Activated CD8-positive, alpha-beta T cell treated with anti-CD3 and anti-CD28 coated beads for 36 hours (primary cell): ENCODE measurements at regions of chr1 and their contacts with region 1.

Region 1: GRCh38 chr1:66725885-66726665 is 26.2 kb upstream of the DYNLT5 start:
- DNase-seq: peak; percentile 66
- ATAC-seq: peak; percentile 87
- H3K4me3 Mint-ChIP-seq: no peak overlapping the region
- H3K27ac Mint-ChIP-seq: no peak overlapping the region
- H3K4me1 Mint-ChIP-seq: peaks cover 13% of the 10 kb centered on the region
- H3K27me3 Mint-ChIP-seq: peaks cover 19% of the 10 kb centered on the region
- CTCF ChIP-seq: peak; percentile 87

Region 2: DNA sequence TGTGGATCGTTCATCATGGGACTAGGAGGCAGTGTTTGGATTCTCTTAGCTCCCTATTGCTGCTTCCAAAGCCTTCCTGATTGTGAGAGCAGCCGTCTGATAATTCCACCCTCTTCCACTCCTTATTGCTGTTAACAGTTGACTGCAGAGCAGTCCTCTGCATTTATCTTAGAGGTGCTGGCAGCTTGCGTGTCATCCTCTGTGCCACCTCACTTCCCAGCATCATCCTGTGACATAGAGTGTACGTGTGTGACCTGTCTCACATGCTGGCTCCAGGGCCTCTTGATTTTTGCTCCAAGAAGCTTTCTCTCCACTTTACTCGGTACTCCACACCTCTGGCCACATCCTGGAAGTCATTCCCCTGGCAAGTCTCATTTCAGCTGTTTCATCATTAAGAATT is 26.9 kb before region 1 on chr1:
- CTCF ChIA-PET with region 1: interaction called, 11 read pairs
- POLR2A ChIA-PET with region 1: no interaction called
- intact Hi-C with region 1: no loop called
- DNase-seq: no peak
- ATAC-seq: no peak
- H3K4me3 Mint-ChIP-seq: no peak overlapping the region
- H3K27ac Mint-ChIP-seq: no peak overlapping the region
- H3K4me1 Mint-ChIP-seq: no peaks in the 10 kb centered on the region
- H3K27me3 Mint-ChIP-seq: peaks cover 3% of the 10 kb centered on the region
- CTCF ChIP-seq: no peak

Region 3: GRCh38 chr1:66711420-66711819 is 14.7 kb before region 1 on chr1:
- CTCF ChIA-PET with region 1: interaction called, 17 read pairs
- POLR2A ChIA-PET with region 1: no interaction called
- intact Hi-C with region 1: no loop called
- DNase-seq: no peak
- ATAC-seq: no peak
- H3K4me3 Mint-ChIP-seq: no peak overlapping the region
- H3K27ac Mint-ChIP-seq: no peak overlapping the region
- H3K4me1 Mint-ChIP-seq: no peaks in the 10 kb centered on the region
- H3K27me3 Mint-ChIP-seq: peaks cover 2% of the 10 kb centered on the region
- CTCF ChIP-seq: no peak

Region 4: GRCh38 chr1:66739401-66740157 is 13.5 kb after region 1 on chr1:
- CTCF ChIA-PET with region 1: interaction called, 31 read pairs
- POLR2A ChIA-PET with region 1: no interaction called
- intact Hi-C with region 1: no loop called
- DNase-seq: no peak
- ATAC-seq: no peak
- H3K4me3 Mint-ChIP-seq: no peak overlapping the region
- H3K27ac Mint-ChIP-seq: no peak overlapping the region
- H3K4me1 Mint-ChIP-seq: peaks cover 5% of the 10 kb centered on the region
- H3K27me3 Mint-ChIP-seq: no peaks in the 10 kb centered on the region
- CTCF ChIP-seq: no peak

Region 5: DNA sequence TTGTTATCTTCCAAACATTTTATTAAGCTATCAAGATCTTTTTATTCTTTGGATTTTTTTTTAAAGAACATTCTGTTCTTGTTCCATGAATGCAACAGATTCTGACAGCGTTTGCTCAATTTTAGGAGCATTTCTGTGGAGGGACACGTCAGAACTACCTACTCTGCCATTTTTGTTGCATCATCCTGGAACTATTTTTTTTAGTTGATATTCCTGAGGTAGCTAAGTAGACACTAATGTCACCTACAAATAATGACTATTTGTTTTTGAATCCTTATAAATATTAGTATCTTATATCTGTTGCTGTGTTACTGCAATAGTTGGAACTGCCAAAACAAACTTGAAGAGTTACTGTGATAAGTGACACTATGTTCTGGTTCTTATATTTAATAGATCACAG is 141.4 kb after region 1 on chr1:
- CTCF ChIA-PET with region 1: no interaction called
- POLR2A ChIA-PET with region 1: no interaction called
- intact Hi-C with region 1: no loop called
- DNase-seq: no peak
- ATAC-seq: no peak
- H3K4me3 Mint-ChIP-seq: no peak overlapping the region
- H3K27ac Mint-ChIP-seq: no peak overlapping the region
- H3K4me1 Mint-ChIP-seq: no peaks in the 10 kb centered on the region
- H3K27me3 Mint-ChIP-seq: no peaks in the 10 kb centered on the region
- CTCF ChIP-seq: no peak

Region 6: DNA sequence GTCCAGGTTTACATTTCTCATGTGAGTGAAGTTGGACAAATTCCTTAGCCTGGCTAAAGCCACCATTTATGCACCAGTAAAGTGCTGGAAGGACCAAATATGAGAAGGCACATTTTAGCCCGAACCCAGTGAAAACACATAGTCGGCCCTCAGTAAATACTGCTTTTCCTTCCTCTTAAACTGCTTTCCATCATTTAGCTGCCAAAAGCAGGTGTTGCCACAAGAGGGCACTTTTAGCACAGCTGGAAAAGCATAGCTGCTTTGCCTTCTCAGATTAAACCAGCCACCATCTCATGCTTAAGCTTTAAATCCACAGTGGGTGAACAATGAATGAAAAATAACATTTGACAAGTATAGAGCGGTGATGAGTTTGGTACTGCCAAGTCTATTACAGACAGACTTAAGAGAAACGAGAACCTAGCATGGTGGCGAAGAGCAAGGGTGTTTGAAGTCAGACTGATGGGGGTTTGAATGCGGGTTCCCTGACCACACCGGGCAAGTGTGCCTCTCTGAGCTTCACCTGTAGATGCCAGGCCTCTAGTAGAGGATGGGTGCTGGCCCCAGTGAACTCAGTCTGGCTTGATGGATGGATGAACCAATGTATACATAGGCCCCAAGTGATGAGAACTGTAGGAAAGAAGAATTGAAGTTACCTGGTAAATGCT is 270.1 kb after region 1 on chr1:
- CTCF ChIA-PET with region 1: no interaction called
- POLR2A ChIA-PET with region 1: no interaction called
- intact Hi-C with region 1: no loop called
- DNase-seq: peak; percentile 83
- ATAC-seq: peak; percentile 88
- H3K4me3 Mint-ChIP-seq: no peak overlapping the region
- H3K27ac Mint-ChIP-seq: no peak overlapping the region
- H3K4me1 Mint-ChIP-seq: peaks cover 17% of the 10 kb centered on the region
- H3K27me3 Mint-ChIP-seq: no peaks in the 10 kb centered on the region
- CTCF ChIP-seq: peak; percentile 71